Activated CD8-positive, alpha-beta memory T cell treated with anti-CD3 and anti-CD28 coated beads, Interleukin-2, amount 10 ng/mL, durations not matched to agents 7 days and 5 days (primary cell): ENCODE measurements at regions of chr1 and their contacts with region 1.

Region 1: DNA sequence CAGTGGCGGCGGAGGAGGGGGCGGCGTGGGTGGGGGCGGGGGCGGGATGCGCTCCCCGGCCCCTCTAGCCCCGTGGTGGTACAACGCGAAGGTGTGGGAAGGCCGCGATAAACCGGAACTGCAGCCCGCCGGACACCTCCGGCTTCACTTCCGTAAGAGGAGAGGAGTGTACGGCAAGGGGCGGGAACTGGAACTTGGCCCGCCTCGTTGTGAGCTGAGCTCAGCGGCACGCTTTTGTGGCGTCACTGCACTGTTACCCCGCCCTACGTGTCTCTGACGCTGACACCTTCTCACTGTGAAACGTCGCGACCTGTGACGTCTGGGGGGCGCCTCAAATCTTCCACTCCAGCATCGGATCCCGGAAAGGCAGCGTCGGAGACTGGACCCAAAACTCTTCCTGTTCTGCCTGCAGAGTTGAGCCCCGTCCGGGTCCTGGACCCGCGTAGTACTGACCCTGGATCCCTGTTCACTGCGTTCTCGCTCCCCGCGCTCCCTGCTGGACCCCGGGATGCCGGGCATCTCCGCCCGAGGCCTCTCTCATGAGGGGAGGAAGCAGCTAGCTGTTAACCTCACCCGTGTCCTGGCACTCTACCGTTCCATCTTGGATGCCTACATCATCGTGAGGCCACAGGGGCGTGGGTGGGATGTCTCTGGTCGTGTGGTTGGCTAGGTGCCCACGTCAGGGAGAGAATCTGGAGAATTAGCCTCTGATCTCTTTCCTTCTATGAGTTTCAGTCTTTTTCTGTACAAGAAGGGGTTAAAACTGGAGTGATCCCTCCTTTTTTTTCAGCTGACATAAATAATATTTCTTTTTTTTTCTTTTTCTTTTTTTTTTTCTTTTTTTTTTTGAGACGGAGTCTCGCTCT is at the start of gene ISG20L2:
- DNase-seq: peak; percentile 99
- ATAC-seq: peak; percentile 89
- H3K4me3 Mint-ChIP-seq: no peak within 1 kb of the TSS
- H3K27ac Mint-ChIP-seq: no peak within 1 kb of the TSS
- H3K4me1 Mint-ChIP-seq: peaks cover 29% of the 10 kb centered on the region
- H3K27me3 Mint-ChIP-seq: no peaks in the 10 kb centered on the region
- total RNA-seq, gene ISG20L2: 56.0 to 70.3 TPM

Region 2: DNA sequence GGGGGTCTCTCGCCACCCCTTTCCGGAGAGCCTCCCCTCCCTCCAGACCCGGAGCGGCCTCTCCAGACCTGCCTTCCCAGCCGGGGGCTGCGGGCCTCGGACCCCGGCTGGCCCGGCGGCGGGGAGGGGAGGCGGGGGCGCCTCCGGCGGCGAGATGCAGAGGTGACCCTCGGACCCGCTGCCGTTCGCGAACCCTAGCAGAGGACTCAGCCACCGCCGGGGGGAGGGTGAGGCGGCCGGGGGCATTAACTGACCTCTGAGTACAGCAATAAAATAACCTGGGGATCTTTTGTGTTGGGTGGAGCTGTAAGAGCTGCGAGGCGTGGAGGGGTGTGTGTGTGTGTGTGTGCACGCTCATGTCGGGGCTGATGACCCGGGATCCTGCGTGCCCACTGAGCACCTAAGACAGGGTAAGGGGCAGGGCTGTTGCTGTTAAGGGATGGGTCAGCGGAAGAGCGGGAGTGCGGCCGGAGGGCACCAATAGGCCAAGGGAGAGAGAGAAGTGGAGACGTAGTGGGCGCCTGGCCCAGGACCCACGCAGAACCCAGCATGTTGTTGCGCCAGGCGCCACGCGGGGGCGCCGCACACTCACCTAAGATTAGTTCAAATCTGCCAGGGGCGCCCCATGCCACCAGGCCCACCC is 103.3 kb before region 1 on chr1:
- CTCF ChIA-PET with region 1: interaction called, 21 read pairs
- DNase-seq: peak; percentile 64
- ATAC-seq: peak; percentile 64
- H3K4me3 Mint-ChIP-seq: no peak overlapping the region
- H3K27ac Mint-ChIP-seq: no peak overlapping the region
- H3K4me1 Mint-ChIP-seq: peaks cover 8% of the 10 kb centered on the region
- H3K27me3 Mint-ChIP-seq: peaks cover 68% of the 10 kb centered on the region

Region 3: GRCh38 chr1:156689035-156689952 is 39.5 kb before region 1 on chr1:
- CTCF ChIA-PET with region 1: interaction called, 217 read pairs
- DNase-seq: peak; percentile 83
- ATAC-seq: peak; percentile 94
- H3K4me3 Mint-ChIP-seq: no peak overlapping the region
- H3K27ac Mint-ChIP-seq: no peak overlapping the region
- H3K4me1 Mint-ChIP-seq: peaks cover 29% of the 10 kb centered on the region
- H3K27me3 Mint-ChIP-seq: peaks cover 67% of the 10 kb centered on the region

Region 4: GRCh38 chr1:156751758-156752757 is 23.2 kb after region 1 on chr1:
- CTCF ChIA-PET with region 1: interaction called, 71 read pairs
- DNase-seq: peak; percentile 98
- ATAC-seq: peak; percentile 84
- H3K4me3 Mint-ChIP-seq: peak overlapping the region; percentile 98
- H3K27ac Mint-ChIP-seq: peak overlapping the region; percentile 93
- H3K4me1 Mint-ChIP-seq: peaks cover 42% of the 10 kb centered on the region
- H3K27me3 Mint-ChIP-seq: no peaks in the 10 kb centered on the region

Region 5: GRCh38 chr1:156797212-156797871 is 68.5 kb after region 1 on chr1:
- CTCF ChIA-PET with region 1: interaction called, 71 read pairs
- DNase-seq: peak; percentile 76
- ATAC-seq: peak; percentile 77
- H3K4me3 Mint-ChIP-seq: no peak overlapping the region
- H3K27ac Mint-ChIP-seq: peak overlapping the region; percentile 10
- H3K4me1 Mint-ChIP-seq: peaks cover 30% of the 10 kb centered on the region
- H3K27me3 Mint-ChIP-seq: no peaks in the 10 kb centered on the region

Region 6: GRCh38 chr1:156860113-156860627 is 131.3 kb after region 1 on chr1:
- CTCF ChIA-PET with region 1: interaction called, 146 read pairs
- DNase-seq: peak; percentile 69
- ATAC-seq: peak; percentile 65
- H3K4me3 Mint-ChIP-seq: peak overlapping the region; percentile 72
- H3K27ac Mint-ChIP-seq: no peak overlapping the region
- H3K4me1 Mint-ChIP-seq: peaks cover 43% of the 10 kb centered on the region
- H3K27me3 Mint-ChIP-seq: peaks cover 42% of the 10 kb centered on the region